Psoas muscle (tissue), 8 donors: ENCODE measurements at regions of chr17 and their contacts with region 1.

Region 1: GRCh38 chr17:8041249-8041928 is 2.5 kb downstream of the ALOX15B start:
- DNase-seq: no peak
- ATAC-seq: peak; percentile 36 to 80 (median 58)
- H3K4me3 ChIP-seq: no peak overlapping the region
- H3K27ac ChIP-seq: no peak overlapping the region
- H3K4me1 ChIP-seq: no peaks in the 10 kb centered on the region
- H3K27me3 ChIP-seq: peaks cover 0 to 33% (median 5%) of the 10 kb centered on the region in 3 donors
- CTCF ChIP-seq: peak; percentile 48

Region 2: DNA sequence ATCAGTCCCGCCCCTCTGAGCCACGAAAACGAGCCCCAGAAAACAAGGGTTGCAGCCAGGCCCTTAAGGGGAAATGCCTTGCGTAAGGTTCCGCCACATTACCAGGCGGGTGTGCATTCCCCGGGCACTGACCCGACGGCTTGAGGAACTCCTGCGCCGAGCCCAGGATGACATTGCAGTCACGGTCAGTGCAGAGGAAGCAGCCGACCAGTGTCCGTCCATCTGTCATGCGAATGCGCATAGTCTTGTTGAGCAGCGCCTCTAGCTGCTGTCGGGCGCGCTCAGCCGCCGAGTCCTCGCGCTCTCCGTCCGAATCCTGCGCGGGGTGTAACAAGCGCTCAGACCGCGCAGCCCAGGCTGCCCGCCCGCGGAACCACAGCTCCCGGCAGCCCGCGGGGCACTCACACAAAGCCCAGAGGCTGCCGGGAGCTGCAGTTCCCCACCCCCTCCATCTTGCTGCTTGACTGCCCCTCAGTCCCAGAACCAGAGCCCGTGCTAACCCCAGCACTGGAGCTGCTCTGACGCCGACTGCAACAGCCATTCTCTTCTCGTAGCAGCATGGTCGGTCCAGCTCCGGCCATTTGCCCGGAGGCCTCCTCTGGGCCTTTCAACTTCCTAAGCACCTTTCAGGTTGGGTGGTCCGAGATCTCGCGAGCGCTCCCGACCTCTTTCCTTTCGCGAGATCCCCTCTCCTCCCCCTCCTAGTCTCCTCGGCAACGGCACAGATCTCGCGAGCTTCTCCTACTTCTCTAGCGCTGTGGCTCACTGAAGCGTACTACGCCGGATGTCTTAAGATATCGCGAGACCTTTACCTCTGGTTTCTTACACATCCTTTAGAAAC is 184.3 kb before region 1 on chr17 and contains the start of gene NAA38:
- intact Hi-C with region 1: loop called in 1 of 2 experiments (anchors 2 kb)
- DNase-seq: peak; percentile 96 to 98
- ATAC-seq: peak; percentile 88 to 92 (median 90)
- H3K4me3 ChIP-seq: peak within 1 kb of the TSS; percentile 86
- H3K27ac ChIP-seq: peak within 1 kb of the TSS; percentile 93
- H3K4me1 ChIP-seq: peaks cover 27% of the 10 kb centered on the region
- H3K27me3 ChIP-seq: no peaks in the 10 kb centered on the region
- CTCF ChIP-seq: peak; percentile 43
- total RNA-seq, gene NAA38: 60.8 to 95.4 (median 73.3) TPM

Region 3: GRCh38 chr17:7903154-7904103 is 138.0 kb before region 1 on chr17:
- intact Hi-C with region 1: loop called in 1 of 2 experiments (anchors 5 kb)
- DNase-seq: no peak
- ATAC-seq: no peak
- H3K4me3 ChIP-seq: no peak overlapping the region
- H3K27ac ChIP-seq: no peak overlapping the region
- H3K4me1 ChIP-seq: no peaks in the 10 kb centered on the region
- H3K27me3 ChIP-seq: no peaks in the 10 kb centered on the region
- CTCF ChIP-seq: no peak

Region 4: DNA sequence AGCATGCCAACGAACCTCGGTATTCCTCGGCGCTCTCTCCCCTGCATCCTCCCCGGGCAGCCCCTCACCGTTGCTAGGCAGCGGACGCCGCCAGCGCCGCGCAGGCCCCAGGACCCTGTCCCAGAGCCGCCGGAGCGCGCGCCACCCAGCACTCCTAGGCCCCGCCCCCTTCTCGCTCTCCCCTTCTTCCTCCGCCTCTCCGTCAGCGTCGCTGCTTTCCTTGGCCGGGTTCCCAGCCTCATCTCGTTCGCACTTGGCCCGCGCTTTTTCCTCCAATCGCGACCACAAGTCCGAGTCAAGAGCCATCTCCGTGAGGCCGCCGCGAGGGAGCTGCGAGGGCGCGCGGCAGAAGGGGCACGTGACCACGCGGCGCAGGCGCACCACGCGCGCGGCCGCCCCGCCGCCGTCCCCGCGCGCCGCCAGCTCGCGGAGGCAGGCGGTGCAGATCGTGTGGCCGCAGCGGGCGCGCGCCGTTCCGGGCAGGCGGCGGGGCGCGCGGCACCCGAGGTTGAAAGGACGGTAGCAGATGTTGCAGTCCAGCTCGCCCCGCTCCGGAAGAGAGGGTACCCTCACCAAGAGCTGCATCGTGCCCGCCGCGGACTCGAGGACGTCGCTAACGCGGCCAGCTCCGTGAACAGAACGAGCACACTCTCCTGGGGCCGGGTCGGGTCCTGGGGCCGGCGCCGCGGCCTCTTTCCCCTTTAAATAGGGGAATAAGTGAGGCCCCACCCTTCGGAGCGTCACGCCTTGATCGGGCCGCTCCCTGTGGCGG is 125.6 kb before region 1 on chr17 and contains the start of gene RNF227:
- intact Hi-C with region 1: loop called in 1 of 2 experiments (anchors 10 kb)
- DNase-seq: peak; percentile 88 to 95
- ATAC-seq: peak; percentile 83 to 93 (median 92)
- H3K4me3 ChIP-seq: peak within 1 kb of the TSS; percentile 87
- H3K27ac ChIP-seq: peak within 1 kb of the TSS; percentile 85
- H3K4me1 ChIP-seq: peaks cover 21% of the 10 kb centered on the region
- H3K27me3 ChIP-seq: no peaks in the 10 kb centered on the region
- CTCF ChIP-seq: no peak
- total RNA-seq, gene RNF227: 0.62 to 2.6 (median 1.0) TPM

Region 5: GRCh38 chr17:8156246-8156992 is 115.0 kb after region 1 on chr17:
- intact Hi-C with region 1: no loop called
- DNase-seq: peak; percentile 100
- ATAC-seq: peak; percentile 59 to 68 (median 64)
- H3K4me3 ChIP-seq: peak overlapping the region; percentile 97
- H3K27ac ChIP-seq: peak overlapping the region; percentile 100
- H3K4me1 ChIP-seq: peaks cover 31% of the 10 kb centered on the region
- H3K27me3 ChIP-seq: no peaks in the 10 kb centered on the region
- CTCF ChIP-seq: no peak